ENCODE measurements at regions of chr20 and their contacts with region 1.

Region 1: DNA sequence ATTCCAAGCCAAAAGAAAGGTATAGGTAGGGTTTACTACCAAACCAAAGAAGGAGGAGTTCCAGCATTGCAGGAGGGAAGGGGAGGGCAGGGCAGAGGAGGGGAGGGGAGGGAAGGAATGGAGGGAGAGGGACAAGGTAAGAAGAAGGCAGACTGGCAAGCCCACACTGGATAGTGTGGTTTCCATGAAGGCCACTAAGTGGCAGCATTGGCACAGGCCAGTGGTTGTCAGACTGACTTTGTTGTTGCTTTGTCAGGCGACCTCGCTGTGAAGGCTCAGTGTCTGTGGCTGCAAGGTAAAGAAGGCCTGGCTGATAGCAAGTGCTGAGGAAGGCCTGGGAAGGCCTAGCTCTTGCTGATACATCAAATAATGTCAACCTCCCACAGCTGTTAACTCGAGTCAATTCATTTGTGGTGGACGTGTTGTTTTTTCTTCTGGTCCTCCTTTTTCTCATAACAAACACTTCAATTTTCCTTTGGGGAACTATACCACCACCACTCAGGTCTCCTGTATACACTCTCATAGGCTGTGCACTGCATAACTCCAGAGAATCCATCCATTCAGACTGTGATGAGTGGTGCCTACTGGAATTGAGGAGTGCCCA is 7.7 kb upstream of the ZNF334 start:
- DNase-seq: peak; percentile 77
- ATAC-seq: peak; percentile 99
- H3K4me3 Mint-ChIP-seq: no peak overlapping the region
- H3K27ac Mint-ChIP-seq: no peak overlapping the region
- H3K4me1 Mint-ChIP-seq: no peaks in the 10 kb centered on the region
- H3K27me3 Mint-ChIP-seq: peaks cover 22% of the 10 kb centered on the region
- CTCF ChIP-seq: peak; percentile 59

Region 2: DNA sequence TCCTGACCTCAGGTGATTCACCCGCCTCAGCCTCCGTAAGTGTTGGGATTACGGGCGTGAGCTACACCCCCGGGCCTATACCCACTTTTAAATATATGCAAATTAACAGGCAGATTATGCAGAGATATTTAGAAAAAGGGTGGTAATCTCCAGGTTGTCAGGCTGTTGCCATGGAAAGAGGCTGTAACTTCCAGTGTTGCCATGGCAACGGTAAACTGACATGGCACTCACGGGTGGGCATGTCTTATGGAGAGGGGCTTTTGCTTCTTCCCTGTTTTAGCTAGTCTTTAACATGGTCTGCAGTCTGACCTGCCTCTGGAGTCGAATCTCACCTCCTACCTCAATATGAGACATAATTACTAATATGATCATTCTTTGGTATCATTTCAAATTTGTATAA is 52.6 kb before region 1 on chr20:
- CTCF ChIA-PET with region 1: no interaction called
- POLR2A ChIA-PET with region 1: no interaction called
- DNase-seq: no peak
- ATAC-seq: no peak
- H3K4me3 Mint-ChIP-seq: no peak overlapping the region
- H3K27ac Mint-ChIP-seq: no peak overlapping the region
- H3K4me1 Mint-ChIP-seq: peaks cover 5% of the 10 kb centered on the region
- H3K27me3 Mint-ChIP-seq: no peaks in the 10 kb centered on the region
- CTCF ChIP-seq: no peak

Region 3: GRCh38 chr20:46568570-46569129 is 47.6 kb after region 1 on chr20:
- CTCF ChIA-PET with region 1: interaction called, 10 read pairs
- POLR2A ChIA-PET with region 1: no interaction called
- DNase-seq: no peak
- ATAC-seq: no peak; the same call in 1 of the 2 replicates
- H3K4me3 Mint-ChIP-seq: no peak overlapping the region
- H3K27ac Mint-ChIP-seq: no peak overlapping the region
- H3K4me1 Mint-ChIP-seq: no peaks in the 10 kb centered on the region
- H3K27me3 Mint-ChIP-seq: no peaks in the 10 kb centered on the region
- CTCF ChIP-seq: no peak

Measured in WTC11 (cell line).